Caco-2 (cell line): ENCODE measurements at regions of chr15 and their contacts with region 1.

Region 1: DNA sequence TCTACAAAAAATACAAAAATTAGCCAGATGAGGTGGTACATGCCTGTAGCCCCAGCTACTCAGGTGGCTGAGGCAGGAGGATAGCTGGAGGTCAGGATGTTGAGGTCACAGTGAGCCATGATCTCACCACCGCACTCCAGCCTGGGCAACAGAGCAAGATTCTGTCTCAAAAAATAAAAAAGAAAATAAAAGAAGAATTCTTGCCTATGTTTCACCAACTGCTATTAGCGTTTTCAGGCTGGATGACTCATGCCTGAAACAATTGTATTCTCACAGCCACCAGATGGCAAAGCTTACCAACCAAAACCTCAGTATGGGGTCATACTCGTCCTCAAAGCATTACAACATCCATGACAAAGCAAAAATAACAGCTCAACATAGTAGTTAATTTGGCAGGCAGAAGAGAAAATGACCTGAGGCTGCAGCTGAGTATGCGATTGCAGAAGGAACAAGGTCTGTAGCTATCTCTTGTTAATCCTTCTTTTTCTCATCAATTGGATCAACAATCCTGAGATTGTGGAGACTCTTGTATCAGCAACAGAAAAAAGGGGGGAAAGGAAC is 52.2 kb downstream of the TP53BP1 start:
- DNase-seq: peak in 1 of 2 experiments; percentile 46
- H3K4me3 ChIP-seq: no peak overlapping the region
- H3K4me3 Mint-ChIP-seq: no peak overlapping the region
- H3K27ac Mint-ChIP-seq: peak overlapping the region; percentile 33
- H3K4me1 ChIP-seq: no peaks in the 10 kb centered on the region
- H3K4me1 Mint-ChIP-seq: no peaks in the 10 kb centered on the region
- H3K27me3 ChIP-seq: no peaks in the 10 kb centered on the region
- H3K27me3 Mint-ChIP-seq: no peaks in the 10 kb centered on the region
- CTCF ChIP-seq: peak in 1 of 2 experiments; percentile 16

Region 2: GRCh38 chr15:43492673-43493601 is 52.1 kb after region 1 on chr15 and contains the start of gene TP53BP1:
- CTCF ChIA-PET with region 1: no interaction called
- POLR2A ChIA-PET with region 1: no interaction called
- intact Hi-C with region 1: loop called (anchors 1 kb)
- DNase-seq: peak; percentile 94 to 96
- H3K4me3 ChIP-seq: peak within 1 kb of the TSS; percentile 49
- H3K4me3 Mint-ChIP-seq: peak within 1 kb of the TSS; percentile 88
- H3K27ac Mint-ChIP-seq: peak within 1 kb of the TSS; percentile 96
- H3K4me1 ChIP-seq: no peaks in the 10 kb centered on the region
- H3K4me1 Mint-ChIP-seq: peaks cover 14% of the 10 kb centered on the region
- H3K27me3 ChIP-seq: no peaks in the 10 kb centered on the region
- H3K27me3 Mint-ChIP-seq: no peaks in the 10 kb centered on the region
- CTCF ChIP-seq: no peak
- total RNA-seq, gene TP53BP1: 39.8 and 46.8 TPM in 2 replicates

Region 3: DNA sequence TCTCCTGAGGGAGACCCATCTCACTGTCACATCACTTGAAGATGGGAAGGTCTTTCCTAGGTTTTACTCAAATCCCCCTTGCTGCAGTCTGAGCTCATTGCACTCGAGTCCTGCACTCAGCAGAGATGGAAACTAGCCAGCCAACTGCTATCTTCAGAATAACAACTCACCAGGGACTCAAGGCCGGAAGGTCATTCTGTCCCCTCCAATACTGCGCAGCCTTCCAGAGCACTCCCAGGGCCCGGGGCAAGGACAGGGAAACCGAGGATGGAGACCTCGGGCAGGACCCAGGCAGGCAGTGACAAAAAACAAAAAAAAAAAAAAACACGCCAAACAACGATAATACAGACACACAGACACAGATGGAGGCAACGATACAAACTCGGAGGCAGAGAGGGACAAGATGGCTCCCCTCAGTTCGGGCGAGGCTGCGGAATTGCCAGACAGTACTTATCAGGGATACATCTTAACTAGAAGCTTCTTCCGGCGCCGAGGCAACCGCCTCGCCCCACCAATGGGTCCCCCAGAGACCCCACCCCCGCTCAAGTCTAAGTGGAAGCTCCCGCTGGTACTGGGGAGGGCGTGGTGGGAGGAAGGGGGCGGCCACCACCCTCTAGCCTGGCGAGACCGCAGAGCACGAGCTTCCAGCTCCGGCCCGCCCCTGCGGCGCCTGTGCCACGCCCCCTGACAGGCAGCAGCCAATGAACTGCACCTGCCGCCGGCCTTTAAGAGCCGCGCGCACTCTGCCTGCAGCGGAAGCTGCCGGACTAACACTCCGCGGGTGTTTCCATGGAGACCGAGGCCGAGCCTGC is 69.6 kb after region 1 on chr15:
- CTCF ChIA-PET with region 1: interaction called, 18 read pairs
- POLR2A ChIA-PET with region 1: interaction called, 3 read pairs
- intact Hi-C with region 1: loop called (anchors 1 kb)
- DNase-seq: peak; percentile 98
- H3K4me3 ChIP-seq: peak overlapping the region; percentile 52
- H3K4me3 Mint-ChIP-seq: peak overlapping the region; percentile 99
- H3K27ac Mint-ChIP-seq: peak overlapping the region; percentile 87
- H3K4me1 ChIP-seq: peaks cover 5% of the 10 kb centered on the region; the same call in 1 of the 2 replicates
- H3K4me1 Mint-ChIP-seq: peaks cover 18% of the 10 kb centered on the region
- H3K27me3 ChIP-seq: no peaks in the 10 kb centered on the region; the same call in 1 of the 2 replicates
- H3K27me3 Mint-ChIP-seq: peaks cover 5% of the 10 kb centered on the region
- CTCF ChIP-seq: peak in 1 of 2 experiments; percentile 5

Region 4: DNA sequence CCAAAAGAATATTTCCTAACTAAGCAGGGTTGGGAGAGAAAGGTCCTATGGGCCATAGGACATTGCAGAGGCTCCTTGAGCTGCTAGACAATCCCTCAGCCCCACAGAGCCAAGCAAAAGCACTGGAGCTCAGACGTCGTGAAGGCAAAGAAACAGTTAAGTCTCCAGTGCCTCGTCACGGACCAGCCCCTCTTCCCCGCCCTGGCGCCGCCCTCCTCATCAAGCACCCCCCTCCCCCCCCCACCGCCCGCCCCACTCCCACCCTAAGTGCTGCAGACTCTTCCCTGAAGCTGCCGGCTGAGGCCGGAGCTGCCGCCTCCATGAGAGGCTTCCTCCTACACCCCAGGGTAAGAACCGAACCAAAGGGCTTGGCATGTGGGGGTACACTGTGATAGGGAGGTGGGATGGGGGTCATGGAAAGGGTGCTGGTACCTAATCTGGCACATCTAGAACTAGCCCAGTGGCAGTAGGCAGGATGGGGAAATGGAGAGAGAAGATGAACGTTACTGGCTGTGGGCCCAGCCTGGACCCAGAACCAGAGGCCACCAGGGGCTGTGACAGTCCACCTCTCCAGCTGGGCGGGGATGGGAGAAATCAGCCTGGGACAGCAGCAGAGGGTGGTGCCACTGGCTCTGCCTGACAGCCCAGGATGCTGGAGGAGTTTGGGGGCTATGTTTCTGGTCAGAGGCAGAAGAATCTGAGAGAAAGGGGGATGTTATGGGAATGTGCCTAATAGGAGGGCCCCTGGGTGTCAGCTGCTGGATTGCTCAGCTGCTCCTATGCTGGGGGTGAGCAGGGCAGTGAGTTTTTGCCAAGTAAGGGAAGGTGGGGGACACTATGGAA is 76.8 kb after region 1 on chr15 and contains the start of gene MAP1A:
- CTCF ChIA-PET with region 1: interaction called, 10 read pairs
- POLR2A ChIA-PET with region 1: interaction called, 3 read pairs
- intact Hi-C with region 1: loop called (anchors 2 kb)
- DNase-seq: peak in 1 of 2 experiments; percentile 34
- H3K4me3 ChIP-seq: peak within 1 kb of the TSS; percentile 29
- H3K4me3 Mint-ChIP-seq: peak within 1 kb of the TSS; percentile 75
- H3K27ac Mint-ChIP-seq: no peak within 1 kb of the TSS
- H3K4me1 ChIP-seq: 0 out of 2 replicates have a peak, but pooled peaks cover 4% of the 10 kb centered on the region
- H3K4me1 Mint-ChIP-seq: peaks cover 24% of the 10 kb centered on the region
- H3K27me3 ChIP-seq: no peaks in the 10 kb centered on the region
- H3K27me3 Mint-ChIP-seq: peaks cover 6% of the 10 kb centered on the region
- CTCF ChIP-seq: peak in 1 of 2 experiments; percentile 1
- total RNA-seq, gene MAP1A: 0.84 and 0.88 TPM in 2 replicates